Endothelial cell of umbilical vein (primary cell): ENCODE measurements at regions of chr7 and their contacts with region 1.

Region 1: GRCh38 chr7:151631968-151632749 is 112.5 kb upstream of the RHEB start:
- DNase-seq: peak; percentile 68
- H3K4me3 ChIP-seq: peak overlapping the region; percentile 97 to 100 (median 99)
- H3K27ac ChIP-seq: peak overlapping the region; percentile 66
- H3K4me1 ChIP-seq: peaks cover 22% of the 10 kb centered on the region
- H3K27me3 ChIP-seq: no peaks in the 10 kb centered on the region
- CTCF ChIP-seq: peak; percentile 33 to 40
- POLR2A ChIP-seq: peak; percentile 74

Region 2: GRCh38 chr7:151448261-151449252 is 183.6 kb before region 1 on chr7:
- CTCF ChIA-PET with region 1: no interaction called
- POLR2A ChIA-PET with region 1: no interaction called
- dilution Hi-C with region 1: no loop called
- intact Hi-C with region 1: no loop called
- DNase-seq: peak; percentile 72
- H3K4me3 ChIP-seq: peak overlapping the region; percentile 12 to 53 (median 18)
- H3K27ac ChIP-seq: no peak overlapping the region
- H3K4me1 ChIP-seq: no peaks in the 10 kb centered on the region
- H3K27me3 ChIP-seq: peaks cover 0 to 7% of the 10 kb centered on the region in 2 experiments
- CTCF ChIP-seq: peak; percentile 70 to 80
- POLR2A ChIP-seq: no peak

Region 3: GRCh38 chr7:151472644-151473380 is 159.3 kb before region 1 on chr7:
- CTCF ChIA-PET with region 1: no interaction called
- POLR2A ChIA-PET with region 1: no interaction called
- dilution Hi-C with region 1: no loop called
- intact Hi-C with region 1: loop called (anchors 5 kb)
- DNase-seq: peak; percentile 86
- H3K4me3 ChIP-seq: no peak overlapping the region
- H3K27ac ChIP-seq: peak overlapping the region; percentile 69
- H3K4me1 ChIP-seq: peaks cover 17% of the 10 kb centered on the region
- H3K27me3 ChIP-seq: no peaks in the 10 kb centered on the region
- CTCF ChIP-seq: no peak
- POLR2A ChIP-seq: no peak

Region 4: GRCh38 chr7:151585744-151586393 is 46.3 kb before region 1 on chr7:
- CTCF ChIA-PET with region 1: interaction called, 21 read pairs
- POLR2A ChIA-PET with region 1: no interaction called
- dilution Hi-C with region 1: no loop called
- intact Hi-C with region 1: no loop called
- DNase-seq: peak; percentile 77
- H3K4me3 ChIP-seq: no peak overlapping the region
- H3K27ac ChIP-seq: peak overlapping the region; percentile 83
- H3K4me1 ChIP-seq: peaks cover 30% of the 10 kb centered on the region
- H3K27me3 ChIP-seq: no peaks in the 10 kb centered on the region
- CTCF ChIP-seq: peak in 1 of 2 donors; percentile 28
- POLR2A ChIP-seq: no peak

Region 5: GRCh38 chr7:151642746-151643145 is 10.6 kb after region 1 on chr7:
- CTCF ChIA-PET with region 1: interaction called, 12 read pairs
- POLR2A ChIA-PET with region 1: no interaction called
- dilution Hi-C with region 1: no loop called
- intact Hi-C with region 1: no loop called
- DNase-seq: no peak
- H3K4me3 ChIP-seq: no peak overlapping the region
- H3K27ac ChIP-seq: no peak overlapping the region
- H3K4me1 ChIP-seq: peaks cover 5% of the 10 kb centered on the region
- H3K27me3 ChIP-seq: no peaks in the 10 kb centered on the region
- CTCF ChIP-seq: no peak
- POLR2A ChIP-seq: no peak

Region 6: GRCh38 chr7:151736403-151736909 is 104.3 kb after region 1 on chr7:
- CTCF ChIA-PET with region 1: interaction called, 4 read pairs
- POLR2A ChIA-PET with region 1: no interaction called
- dilution Hi-C with region 1: no loop called
- intact Hi-C with region 1: loop called (anchors 2 kb)
- DNase-seq: peak; percentile 92
- H3K4me3 ChIP-seq: peak overlapping the region in 2 of 3 experiments; percentile 32 to 35
- H3K27ac ChIP-seq: peak overlapping the region; percentile 75
- H3K4me1 ChIP-seq: peaks cover 15% of the 10 kb centered on the region
- H3K27me3 ChIP-seq: no peaks in the 10 kb centered on the region
- CTCF ChIP-seq: peak in 1 of 2 donors; percentile 23
- POLR2A ChIP-seq: peak; percentile 67